ENCODE measurements at regions of chr6 and their contacts with region 1.

Region 1: DNA sequence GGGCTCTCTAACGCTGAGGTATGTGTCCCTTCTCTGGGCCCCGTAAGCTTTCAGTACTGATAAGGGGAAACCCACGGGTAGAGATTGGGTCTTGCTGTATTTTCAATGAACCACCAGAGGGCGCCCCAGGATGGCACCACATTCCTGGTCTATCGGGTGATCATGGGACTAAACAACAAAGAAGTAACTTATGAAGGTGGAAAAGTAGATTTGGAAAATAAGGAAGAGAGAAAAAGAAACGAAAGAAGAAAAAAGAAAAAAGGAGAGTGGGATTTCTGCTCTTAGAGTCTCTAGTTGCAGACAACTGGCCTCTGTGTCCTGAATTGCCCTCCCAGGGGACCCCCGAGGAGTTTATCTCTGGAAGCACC is 93.8 kb downstream of the GMPR start:
- DNase-seq: peak; percentile 72 to 92
- ATAC-seq: peak; percentile 96 to 98 (median 97)
- H3K4me3 ChIP-seq: no peak overlapping the region
- H3K4me3 Mint-ChIP-seq: no peak overlapping the region
- H3K27ac ChIP-seq: no peak overlapping the region
- H3K27ac Mint-ChIP-seq: no peak overlapping the region
- H3K4me1 ChIP-seq: peaks cover 12% of the 10 kb centered on the region
- H3K4me1 Mint-ChIP-seq: no peaks in the 10 kb centered on the region
- H3K27me3 ChIP-seq: no peaks in the 10 kb centered on the region
- H3K27me3 Mint-ChIP-seq: no peaks in the 10 kb centered on the region
- CTCF ChIP-seq: peak; percentile 69

Region 2: DNA sequence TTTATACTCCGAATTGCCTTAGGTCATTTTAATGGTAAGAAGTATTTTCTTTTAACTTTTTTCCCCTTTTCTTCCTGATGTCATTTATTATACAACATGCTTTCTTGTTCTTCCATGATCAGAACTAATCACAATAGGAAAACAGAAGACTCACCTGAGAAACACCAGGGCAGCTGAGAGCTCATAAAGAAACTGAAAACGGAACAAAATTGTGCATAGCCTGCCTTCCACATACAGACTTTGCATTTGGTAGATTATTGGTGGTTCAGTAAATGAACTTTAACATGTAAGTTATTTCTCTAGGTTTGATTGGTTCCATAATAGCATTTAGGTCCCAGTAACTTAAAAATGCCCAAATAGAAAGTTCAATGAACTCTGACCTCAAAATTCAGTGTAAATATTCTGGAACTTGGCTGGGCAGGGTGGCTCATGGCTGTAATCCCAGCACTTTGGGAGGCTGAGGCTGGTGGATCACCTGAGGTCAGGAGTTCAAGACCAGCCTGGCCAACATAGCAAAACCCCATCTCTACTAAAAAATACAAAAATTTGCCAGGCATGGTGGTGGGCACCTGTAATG is 508.2 kb before region 1 on chr6:
- intact Hi-C with region 1: no loop called
- DNase-seq: no peak
- ATAC-seq: no peak
- H3K4me3 ChIP-seq: no peak overlapping the region
- H3K4me3 Mint-ChIP-seq: no peak overlapping the region
- H3K27ac ChIP-seq: no peak overlapping the region
- H3K27ac Mint-ChIP-seq: no peak overlapping the region
- H3K4me1 ChIP-seq: no peaks in the 10 kb centered on the region
- H3K4me1 Mint-ChIP-seq: peaks cover 0 to under 1% of the 10 kb centered on the region in 2 donors
- H3K27me3 ChIP-seq: peaks cover 6% of the 10 kb centered on the region
- H3K27me3 Mint-ChIP-seq: peaks cover 25 to 28% of the 10 kb centered on the region in 2 donors
- CTCF ChIP-seq: no peak

Region 3: DNA sequence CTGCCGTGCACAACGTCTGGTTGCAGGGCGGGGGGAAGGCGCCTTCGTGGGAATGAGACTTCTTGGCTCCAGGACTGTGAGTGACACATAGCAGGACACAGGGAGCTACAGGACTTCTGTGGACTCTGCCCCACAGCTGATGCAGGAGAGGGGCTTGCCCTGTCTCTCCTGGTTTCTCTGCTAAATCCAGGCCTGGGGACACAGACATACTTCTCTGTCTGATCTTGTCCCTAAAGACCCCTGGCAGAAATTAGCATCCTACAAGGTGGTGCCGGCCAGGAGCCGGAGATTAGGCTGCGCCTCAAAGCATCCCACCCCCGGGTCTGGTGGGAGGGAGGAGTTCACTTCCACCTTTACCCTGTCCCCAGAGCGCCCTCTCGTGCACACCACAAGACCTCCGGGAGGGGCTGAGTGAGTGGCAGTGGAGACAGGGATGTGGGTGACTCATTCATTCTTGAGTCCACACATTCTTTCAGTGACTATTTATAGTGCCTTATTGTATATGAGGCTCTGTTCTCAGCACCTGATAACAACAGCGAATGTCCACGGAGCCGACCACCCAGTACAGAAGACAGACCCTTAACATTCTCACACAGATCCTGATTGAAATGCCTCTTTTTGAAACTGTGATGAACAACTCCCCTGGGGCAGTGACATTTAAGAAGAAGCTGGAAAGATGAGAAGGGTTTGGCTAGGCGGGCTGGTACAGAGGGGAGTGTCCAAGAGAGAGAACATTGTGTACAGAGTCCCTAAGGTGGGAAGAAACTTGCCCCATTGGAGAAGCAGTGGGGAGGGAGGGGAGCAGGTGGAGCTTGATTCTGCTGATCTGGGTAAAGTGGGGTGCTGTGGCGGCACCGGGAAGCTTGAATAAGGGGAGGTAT is 54.8 kb before region 1 on chr6:
- intact Hi-C with region 1: no loop called
- DNase-seq: no peak
- ATAC-seq: peak; percentile 26 to 53 (median 50)
- H3K4me3 ChIP-seq: no peak overlapping the region
- H3K4me3 Mint-ChIP-seq: no peak overlapping the region
- H3K27ac ChIP-seq: no peak overlapping the region
- H3K27ac Mint-ChIP-seq: no peak overlapping the region
- H3K4me1 ChIP-seq: no peaks in the 10 kb centered on the region
- H3K4me1 Mint-ChIP-seq: peaks cover 4 to 6% of the 10 kb centered on the region in 2 donors
- H3K27me3 ChIP-seq: no peaks in the 10 kb centered on the region
- H3K27me3 Mint-ChIP-seq: no peaks in the 10 kb centered on the region
- CTCF ChIP-seq: no peak

Region 4: DNA sequence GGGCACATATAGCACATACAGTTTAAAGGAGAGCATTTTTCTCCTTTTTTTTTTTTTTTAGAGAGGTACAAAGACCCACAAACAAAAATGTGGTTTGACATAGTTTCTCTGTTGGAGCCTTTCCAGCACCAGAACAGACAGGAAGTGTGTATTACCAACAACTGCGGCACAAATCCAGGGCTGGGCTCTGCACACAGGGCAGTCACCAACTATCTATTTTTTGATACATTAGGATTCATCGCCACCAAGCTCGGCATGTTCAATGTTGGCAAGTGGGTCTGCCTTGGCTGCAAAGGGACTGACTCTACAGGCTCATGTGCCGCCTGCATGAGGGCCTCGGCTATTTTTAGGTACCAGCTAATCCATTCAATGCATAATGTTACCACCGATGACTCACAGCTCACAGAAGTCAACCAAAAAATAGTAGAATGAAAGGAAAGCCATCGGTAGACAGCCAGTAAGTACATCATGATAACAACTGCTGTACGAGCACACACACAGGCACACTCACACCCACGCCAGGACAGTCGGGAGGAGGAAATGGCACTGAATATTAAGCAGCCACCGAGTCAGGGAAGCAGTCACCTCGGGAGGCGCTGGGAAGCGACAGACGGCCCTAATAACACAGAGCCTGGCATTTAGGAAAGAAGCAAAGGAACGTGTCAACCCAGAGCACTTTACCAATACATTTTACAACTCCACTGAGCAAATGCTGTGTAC is 12.2 kb before region 1 on chr6:
- intact Hi-C with region 1: loop called (anchors 1 kb)
- DNase-seq: peak; percentile 63 to 86
- ATAC-seq: peak; percentile 59 to 73 (median 64)
- H3K4me3 ChIP-seq: peak overlapping the region; percentile 19
- H3K4me3 Mint-ChIP-seq: peak overlapping the region; percentile 69
- H3K27ac ChIP-seq: peak overlapping the region; percentile 77
- H3K27ac Mint-ChIP-seq: peak overlapping the region; percentile 77 to 95
- H3K4me1 ChIP-seq: peaks cover 73% of the 10 kb centered on the region
- H3K4me1 Mint-ChIP-seq: peaks cover 67 to 70% of the 10 kb centered on the region in 2 donors
- H3K27me3 ChIP-seq: no peaks in the 10 kb centered on the region
- H3K27me3 Mint-ChIP-seq: no peaks in the 10 kb centered on the region
- CTCF ChIP-seq: no peak

Region 5: GRCh38 chr6:16409531-16410441 is 77.6 kb after region 1 on chr6:
- intact Hi-C with region 1: loop called (anchors 1 kb)
- DNase-seq: peak; percentile 31 to 78
- ATAC-seq: peak; percentile 69 to 92 (median 83)
- H3K4me3 ChIP-seq: no peak overlapping the region
- H3K4me3 Mint-ChIP-seq: no peak overlapping the region
- H3K27ac ChIP-seq: no peak overlapping the region
- H3K27ac Mint-ChIP-seq: peak overlapping the region in 1 of 2 donors; percentile 8
- H3K4me1 ChIP-seq: peaks cover 4% of the 10 kb centered on the region
- H3K4me1 Mint-ChIP-seq: peaks cover 3 to 34% of the 10 kb centered on the region in 2 donors
- H3K27me3 ChIP-seq: no peaks in the 10 kb centered on the region
- H3K27me3 Mint-ChIP-seq: no peaks in the 10 kb centered on the region
- CTCF ChIP-seq: peak; percentile 63

Region 6: DNA sequence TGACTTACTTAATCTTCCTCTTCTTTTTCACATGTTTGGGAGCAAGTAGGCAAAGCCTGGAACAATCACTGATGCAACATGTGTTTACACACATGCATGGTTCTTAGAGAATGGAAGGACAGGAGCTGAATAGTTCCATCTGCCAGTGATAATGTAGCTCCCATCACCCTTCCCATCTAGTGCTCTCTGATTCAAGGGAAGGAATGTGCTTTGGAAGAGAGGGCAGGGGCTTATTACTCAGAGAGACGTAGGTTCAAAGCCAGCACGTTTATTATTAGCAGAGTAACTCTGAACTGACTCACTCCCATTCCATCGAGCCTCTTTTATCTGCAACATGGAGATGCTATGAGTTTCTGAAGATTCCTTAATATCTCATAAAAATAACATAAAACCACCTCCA is 118.1 kb after region 1 on chr6:
- intact Hi-C with region 1: no loop called
- DNase-seq: no peak
- ATAC-seq: no peak
- H3K4me3 ChIP-seq: no peak overlapping the region
- H3K4me3 Mint-ChIP-seq: no peak overlapping the region
- H3K27ac ChIP-seq: no peak overlapping the region
- H3K27ac Mint-ChIP-seq: no peak overlapping the region
- H3K4me1 ChIP-seq: no peaks in the 10 kb centered on the region
- H3K4me1 Mint-ChIP-seq: peaks cover 18 to 20% of the 10 kb centered on the region in 2 donors
- H3K27me3 ChIP-seq: no peaks in the 10 kb centered on the region
- H3K27me3 Mint-ChIP-seq: no peaks in the 10 kb centered on the region
- CTCF ChIP-seq: no peak

Region 7: DNA sequence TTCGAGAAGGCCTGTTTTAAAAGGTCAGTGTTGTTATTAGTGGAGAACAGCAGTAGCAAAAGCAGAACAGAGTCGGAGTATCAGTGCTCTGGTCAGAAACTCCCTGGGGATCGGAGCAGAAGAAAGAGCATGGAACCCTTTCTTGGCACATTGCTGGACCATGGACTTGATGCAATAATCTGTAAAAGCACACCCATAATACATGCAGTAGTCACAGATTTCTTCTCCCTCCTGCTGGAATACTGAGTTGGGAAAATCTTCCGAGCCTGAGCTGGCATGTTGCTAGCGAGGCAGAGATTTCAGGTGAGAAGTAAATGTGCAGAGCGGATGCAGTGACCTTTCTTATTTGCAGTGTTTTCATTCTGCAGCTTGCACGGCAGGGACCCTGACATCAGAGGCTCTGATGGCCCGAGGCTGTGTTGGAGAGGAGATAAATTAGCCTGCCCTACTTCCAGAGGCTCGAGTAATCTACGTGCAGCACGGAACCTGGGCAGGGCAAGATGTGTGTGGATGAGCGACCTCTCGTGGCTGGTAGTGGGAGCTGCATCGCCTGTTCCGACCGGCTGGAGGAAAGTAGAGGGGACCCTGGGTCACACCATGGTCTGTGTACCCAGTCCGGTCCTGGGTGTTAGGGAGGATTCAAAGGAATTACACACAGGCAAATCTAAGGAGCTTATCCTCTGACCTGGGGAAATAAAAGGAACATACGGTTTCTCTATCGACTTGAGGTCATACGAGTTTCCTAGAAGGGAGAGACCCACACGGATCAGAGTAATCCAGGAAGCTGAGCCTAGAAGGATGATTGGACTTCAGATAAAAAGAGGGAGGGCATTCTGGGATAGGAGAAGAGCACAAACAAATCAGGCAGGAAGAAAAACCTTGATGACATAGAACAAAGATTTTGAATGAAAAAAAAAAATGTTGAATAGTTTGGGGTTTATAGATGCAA is 632.7 kb after region 1 on chr6:
- intact Hi-C with region 1: loop called (anchors 1 kb)
- DNase-seq: peak; percentile 58 to 78
- ATAC-seq: peak; percentile 86 to 99 (median 95)
- H3K4me3 ChIP-seq: no peak overlapping the region
- H3K4me3 Mint-ChIP-seq: no peak overlapping the region
- H3K27ac ChIP-seq: no peak overlapping the region
- H3K27ac Mint-ChIP-seq: no peak overlapping the region
- H3K4me1 ChIP-seq: peaks cover 3% of the 10 kb centered on the region
- H3K4me1 Mint-ChIP-seq: peaks cover 5 to 7% of the 10 kb centered on the region in 2 donors
- H3K27me3 ChIP-seq: no peaks in the 10 kb centered on the region
- H3K27me3 Mint-ChIP-seq: peaks cover 13 to 18% of the 10 kb centered on the region in 2 donors
- CTCF ChIP-seq: peak; percentile 74

Region 8: GRCh38 chr6:17086469-17086868 is 754.3 kb after region 1 on chr6:
- intact Hi-C with region 1: loop called (anchors 1 kb)
- DNase-seq: peak in 1 of 2 donors; percentile 37
- ATAC-seq: peak in 2 of 3 donors; percentile 39 to 47
- H3K4me3 ChIP-seq: no peak overlapping the region
- H3K4me3 Mint-ChIP-seq: no peak overlapping the region
- H3K27ac ChIP-seq: no peak overlapping the region
- H3K27ac Mint-ChIP-seq: no peak overlapping the region
- H3K4me1 ChIP-seq: no peaks in the 10 kb centered on the region
- H3K4me1 Mint-ChIP-seq: no peaks in the 10 kb centered on the region
- H3K27me3 ChIP-seq: no peaks in the 10 kb centered on the region
- H3K27me3 Mint-ChIP-seq: peaks cover 13 to 42% of the 10 kb centered on the region in 2 donors
- CTCF ChIP-seq: peak; percentile 56